ENCODE measurements at regions of chrX and their contacts with region 1.

Region 1: GRCh38 chrX:148051973-148052372 is 70.8 kb downstream of the FMR1NB start:
- DNase-seq: peak in 3 of 10 donors; percentile 68 to 71 (median 70)

Region 2: DNA sequence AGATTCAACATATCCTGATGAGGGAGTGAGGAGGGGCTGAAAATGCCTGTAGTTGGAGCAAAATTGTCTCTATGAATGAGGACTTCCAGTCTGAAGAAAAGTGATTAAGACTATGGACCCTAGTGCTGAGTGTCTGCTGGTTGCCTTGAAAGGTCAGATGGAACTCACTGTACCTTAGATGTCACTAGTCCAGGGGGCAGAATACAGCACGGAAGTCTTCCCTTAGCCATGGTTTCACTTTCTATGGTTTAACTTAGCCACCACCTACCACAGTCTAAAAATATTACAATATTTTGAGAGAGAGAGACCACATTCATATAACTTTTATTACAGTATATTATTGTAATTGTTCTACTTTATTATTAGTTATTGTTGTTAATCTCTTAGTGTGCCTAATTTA is 152.2 kb after region 1 on chrX:
- intact Hi-C with region 1: no loop called
- DNase-seq: no peak

Region 3: GRCh38 chrX:149286940-149287349 is 1235.0 kb after region 1 on chrX:
- intact Hi-C with region 1: loop called (anchors 2 kb)
- DNase-seq: peak in 9 of 10 donors; percentile 12 to 82 (median 27)

Region 4: GRCh38 chrX:149470955-149471354 is 1419.0 kb after region 1 on chrX:
- intact Hi-C with region 1: loop called (anchors 5 kb)
- DNase-seq: peak; percentile 70 to 98 (median 82)